Body of pancreas (tissue), 4 donors: ENCODE measurements at regions of chr3 and their contacts with region 1.

Region 1: DNA sequence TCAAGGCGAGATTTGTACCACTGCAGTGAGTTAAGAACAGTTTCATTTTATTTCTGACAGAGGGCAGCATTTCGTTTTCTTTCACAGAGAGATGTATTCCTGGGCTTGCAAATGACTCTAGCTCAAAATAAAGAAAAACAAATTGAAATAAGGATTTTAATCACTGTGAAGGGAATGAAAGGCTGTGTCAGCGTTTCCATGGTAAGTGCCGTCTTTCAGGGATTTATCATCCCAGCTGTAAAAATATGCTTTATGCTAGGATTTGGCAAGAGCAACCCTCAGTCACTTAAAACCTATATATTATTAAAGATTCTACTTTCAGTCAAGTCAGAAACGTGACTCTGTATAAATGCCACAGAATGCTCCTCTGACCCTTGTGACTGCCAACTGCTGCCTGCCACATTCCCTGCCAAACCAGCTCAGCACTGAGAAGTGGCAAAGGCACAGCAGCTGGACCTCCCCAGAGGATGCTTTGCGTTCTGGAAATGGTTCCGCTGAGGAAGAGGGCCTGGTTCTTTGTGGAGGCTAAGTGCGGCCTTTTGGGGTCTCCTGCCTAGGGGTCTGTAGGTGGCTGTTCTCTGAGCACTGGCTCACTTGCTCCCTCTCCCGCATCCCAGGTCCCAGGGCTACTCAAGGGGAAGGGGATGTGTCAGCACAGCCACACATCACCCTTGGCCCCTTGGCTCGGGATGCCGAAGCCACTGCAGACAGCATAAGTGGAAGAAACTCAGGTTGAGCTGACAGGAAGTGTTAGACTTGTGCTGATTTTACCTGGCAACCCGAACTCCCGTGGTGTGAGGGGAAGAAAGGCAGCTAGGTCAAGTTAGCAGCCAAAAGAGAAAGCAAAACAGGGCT is 56.6 kb upstream of the POMGNT2 start:
- DNase-seq: no peak
- ATAC-seq: peak; percentile 76
- H3K4me3 ChIP-seq: no peak overlapping the region
- H3K27ac ChIP-seq: peak overlapping the region in 3 of 4 donors; percentile 0 to 37 (median 36)
- H3K4me1 ChIP-seq: peaks cover 11% of the 10 kb centered on the region
- H3K27me3 ChIP-seq: no peaks in the 10 kb centered on the region
- CTCF ChIP-seq: peak in 6 of 7 experiments; percentile 38 to 65 (median 54)
- POLR2A ChIP-seq: no peak

Region 2: DNA sequence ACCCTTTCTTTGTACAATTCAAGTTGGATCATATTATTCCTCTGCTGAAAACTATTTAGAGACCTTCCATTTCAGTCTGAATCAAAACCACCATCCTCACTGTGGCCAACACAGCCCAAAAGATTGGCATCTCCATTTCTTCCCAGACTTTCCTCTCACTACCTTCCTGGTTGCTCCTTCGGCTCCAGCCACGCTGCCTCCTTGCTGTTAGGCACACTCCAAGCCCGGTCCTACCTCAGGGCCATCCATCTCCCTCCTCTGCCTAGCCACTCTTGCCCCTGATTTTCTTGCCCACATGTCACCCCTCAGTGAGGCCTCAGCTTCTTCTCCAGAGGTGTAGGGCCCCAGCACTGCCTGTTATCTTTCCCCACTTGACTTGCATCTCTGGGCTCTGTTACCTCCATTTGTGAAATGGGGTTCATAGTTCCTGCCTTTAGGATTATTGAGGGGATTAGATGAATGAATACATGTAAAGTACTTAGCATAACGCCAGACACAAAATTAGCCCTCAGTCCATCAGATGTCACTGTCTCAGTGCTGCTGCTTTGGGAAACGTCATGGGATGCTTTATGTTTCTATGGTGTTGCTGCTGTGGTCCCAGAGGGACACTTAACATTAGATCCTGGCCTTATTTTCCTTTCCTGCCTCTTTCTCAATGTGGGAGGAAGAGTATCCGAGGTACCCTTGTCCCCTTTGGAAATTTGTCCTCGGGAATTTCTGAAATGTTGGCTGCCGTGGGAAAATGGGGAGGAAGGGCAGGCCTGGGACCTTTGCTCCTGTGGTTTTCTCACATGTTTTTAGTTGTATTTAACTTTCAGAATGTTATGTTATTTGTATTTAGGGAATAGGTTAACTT is 155.2 kb after region 1 on chr3:
- intact Hi-C with region 1: no loop called
- DNase-seq: no peak
- ATAC-seq: no peak
- H3K4me3 ChIP-seq: no peak overlapping the region
- H3K27ac ChIP-seq: peak overlapping the region in 3 of 4 donors; percentile 21 to 67 (median 27)
- H3K4me1 ChIP-seq: peaks cover 49% of the 10 kb centered on the region
- H3K27me3 ChIP-seq: no peaks in the 10 kb centered on the region
- CTCF ChIP-seq: no peak
- POLR2A ChIP-seq: no peak

Region 3: DNA sequence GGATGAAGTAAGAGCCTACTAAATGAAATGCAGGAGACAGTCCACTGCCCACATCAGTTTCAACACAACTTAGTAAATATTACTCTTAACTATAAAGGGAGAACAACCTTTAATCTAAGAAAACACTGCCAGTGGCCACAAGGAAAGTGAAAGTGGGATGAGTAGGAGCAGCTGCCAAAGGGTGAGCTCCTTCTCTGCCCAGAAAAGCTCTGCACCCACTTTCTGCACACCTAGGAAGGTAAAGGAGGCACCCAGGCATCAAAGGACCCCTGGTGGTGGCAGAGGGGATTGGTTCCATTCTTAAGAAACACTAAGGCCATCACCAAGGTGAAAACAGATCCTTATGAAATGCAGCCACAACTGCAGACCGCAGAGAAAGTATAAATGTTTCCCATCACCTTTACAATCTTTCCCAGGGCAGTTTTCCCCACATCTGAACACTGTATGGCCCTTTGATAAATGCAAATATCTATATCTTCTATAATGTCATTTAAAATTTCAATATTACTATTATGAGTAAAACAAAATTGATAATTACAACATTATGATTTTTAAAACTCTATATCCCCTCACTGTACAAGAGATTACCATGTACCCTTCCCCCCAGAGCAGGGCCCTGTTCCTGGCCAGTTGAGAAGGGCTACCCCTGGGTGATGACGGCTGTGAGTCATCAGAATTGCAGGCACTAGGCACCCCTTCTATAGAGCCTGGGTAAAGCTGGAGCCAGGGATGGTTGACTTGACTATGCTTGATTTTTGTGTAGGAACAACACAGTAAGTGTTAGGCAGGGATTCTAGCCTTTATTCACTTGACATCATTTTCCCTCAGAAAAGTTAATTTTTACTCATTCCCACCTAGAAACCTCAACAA is 215.8 kb after region 1 on chr3:
- intact Hi-C with region 1: loop called (anchors 10 kb)
- DNase-seq: peak; percentile 75 to 85 (median 80)
- ATAC-seq: peak; percentile 89
- H3K4me3 ChIP-seq: no peak overlapping the region
- H3K27ac ChIP-seq: no peak overlapping the region
- H3K4me1 ChIP-seq: no peaks in the 10 kb centered on the region
- H3K27me3 ChIP-seq: no peaks in the 10 kb centered on the region
- CTCF ChIP-seq: peak; percentile 56 to 86 (median 75)
- POLR2A ChIP-seq: no peak

Region 4: GRCh38 chr3:43503067-43503728 is 340.7 kb after region 1 on chr3:
- intact Hi-C with region 1: loop called (anchors 10 kb)
- DNase-seq: no peak
- ATAC-seq: peak; percentile 35
- H3K4me3 ChIP-seq: no peak overlapping the region
- H3K27ac ChIP-seq: no peak overlapping the region
- H3K4me1 ChIP-seq: no peaks in the 10 kb centered on the region
- H3K27me3 ChIP-seq: no peaks in the 10 kb centered on the region
- CTCF ChIP-seq: peak; percentile 24 to 67 (median 60)
- POLR2A ChIP-seq: no peak